Dorsolateral prefrontal cortex (tissue), 120 donors: ENCODE measurements at regions of chr6 and their contacts with region 1.

Region 1: DNA sequence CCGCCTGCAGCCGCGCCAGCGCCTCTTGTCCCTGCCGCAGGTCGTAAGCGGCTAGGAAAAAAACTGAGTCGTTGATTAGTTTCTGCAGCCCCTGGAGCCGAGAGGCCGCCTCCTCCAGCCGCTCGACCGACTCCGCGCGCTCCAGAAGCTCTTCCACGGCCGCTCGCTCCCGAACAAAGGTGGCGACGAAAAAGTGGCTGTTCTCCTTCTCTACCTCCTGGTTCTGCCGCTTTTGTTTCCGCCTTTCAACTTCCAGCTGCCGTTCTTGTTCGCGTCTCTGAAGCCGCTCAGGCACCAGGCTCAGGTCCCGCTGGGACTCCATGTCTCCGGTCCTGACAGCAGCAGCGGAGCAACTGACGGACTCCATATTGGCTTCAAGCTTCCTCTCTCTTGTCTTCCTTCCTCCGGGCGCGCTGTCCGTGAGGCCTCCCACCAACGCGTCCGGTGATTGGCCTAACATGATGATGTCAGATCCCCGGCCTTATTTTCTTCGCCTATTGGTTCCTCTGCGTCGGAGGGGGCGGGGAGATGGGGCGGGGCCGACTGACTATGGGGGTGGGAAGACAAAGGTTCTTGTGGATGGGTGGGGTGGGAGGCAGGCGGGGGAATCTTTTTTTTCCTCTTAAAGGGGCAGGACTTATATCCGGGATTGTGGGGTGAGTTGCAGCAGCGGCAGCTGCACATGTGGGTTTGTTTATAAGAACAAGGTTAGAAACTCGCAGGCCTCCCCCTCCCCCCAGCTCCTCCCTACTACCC is at the start of gene TBCC:
- DNase-seq: peak; percentile 88 to 99 (median 98)
- H3K4me3 ChIP-seq: peak within 1 kb of the TSS; percentile 62 to 100 (median 96)
- H3K27ac ChIP-seq: peak within 1 kb of the TSS; percentile 86 to 99 (median 96)
- H3K27me3 ChIP-seq: no peaks in the 10 kb centered on the region
- CTCF ChIP-seq: peak in 5 of 56 donors; percentile 7 to 23 (median 14)
- total RNA-seq, gene TBCC: 12.9 to 35.3 (median 26.6) TPM

Region 2: GRCh38 chr6:42563697-42564505 is 182.0 kb before region 1 on chr6 and contains the start of gene UBR2:
- intact Hi-C with region 1: loop called (anchors 10 kb)
- DNase-seq: peak; percentile 90 to 99 (median 98)
- H3K4me3 ChIP-seq: peak within 1 kb of the TSS; percentile 57 to 100 (median 92)
- H3K27ac ChIP-seq: peak within 1 kb of the TSS; percentile 69 to 100 (median 97)
- H3K27me3 ChIP-seq: no peaks in the 10 kb centered on the region
- CTCF ChIP-seq: peak in 55 of 56 donors; percentile 29 to 86 (median 67)
- total RNA-seq, gene UBR2: 29.5 to 56.9 (median 37.2) TPM

Region 3: DNA sequence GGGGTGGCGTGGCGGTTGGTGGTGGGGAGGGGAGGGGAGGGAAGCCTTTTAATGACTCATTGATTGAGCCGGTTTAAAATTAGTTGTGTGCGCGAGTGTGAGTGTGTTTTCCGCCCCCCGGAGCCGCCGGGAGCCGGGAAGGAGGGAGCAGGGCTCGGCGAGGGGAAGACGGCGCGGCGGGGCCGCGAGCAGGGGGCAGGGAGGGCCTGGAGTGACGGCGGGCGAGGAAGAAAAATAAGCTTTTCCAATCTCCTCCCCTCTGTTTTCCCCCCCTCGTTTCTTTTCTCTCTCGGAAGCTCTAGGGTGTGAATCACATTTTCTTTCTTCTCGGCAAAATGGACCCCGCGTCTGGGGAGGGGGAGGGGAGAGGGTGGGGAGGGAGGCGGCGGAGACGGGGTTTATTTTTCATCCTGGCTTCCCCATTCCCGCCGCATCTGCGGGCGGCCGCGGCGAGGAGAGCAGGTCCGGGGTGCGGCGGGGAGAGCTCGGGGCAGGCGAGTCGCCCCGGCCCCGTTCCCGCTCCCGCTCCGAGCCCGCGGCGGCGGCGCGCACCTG is 36.8 kb after region 1 on chr6:
- intact Hi-C with region 1: loop called (anchors 1 kb)
- DNase-seq: peak; percentile 51 to 86 (median 75)
- H3K4me3 ChIP-seq: peak overlapping the region; percentile 61 to 98 (median 87)
- H3K27ac ChIP-seq: peak overlapping the region; percentile 99 to 100 (median 100)
- H3K27me3 ChIP-seq: no peaks in the 10 kb centered on the region
- CTCF ChIP-seq: no peak